Activated CD4-positive, alpha-beta memory T cell treated with anti-CD3 and anti-CD28 coated beads for 36 hours (primary cell): ENCODE measurements at regions of chr19 and their contacts with region 1.

Region 1: DNA sequence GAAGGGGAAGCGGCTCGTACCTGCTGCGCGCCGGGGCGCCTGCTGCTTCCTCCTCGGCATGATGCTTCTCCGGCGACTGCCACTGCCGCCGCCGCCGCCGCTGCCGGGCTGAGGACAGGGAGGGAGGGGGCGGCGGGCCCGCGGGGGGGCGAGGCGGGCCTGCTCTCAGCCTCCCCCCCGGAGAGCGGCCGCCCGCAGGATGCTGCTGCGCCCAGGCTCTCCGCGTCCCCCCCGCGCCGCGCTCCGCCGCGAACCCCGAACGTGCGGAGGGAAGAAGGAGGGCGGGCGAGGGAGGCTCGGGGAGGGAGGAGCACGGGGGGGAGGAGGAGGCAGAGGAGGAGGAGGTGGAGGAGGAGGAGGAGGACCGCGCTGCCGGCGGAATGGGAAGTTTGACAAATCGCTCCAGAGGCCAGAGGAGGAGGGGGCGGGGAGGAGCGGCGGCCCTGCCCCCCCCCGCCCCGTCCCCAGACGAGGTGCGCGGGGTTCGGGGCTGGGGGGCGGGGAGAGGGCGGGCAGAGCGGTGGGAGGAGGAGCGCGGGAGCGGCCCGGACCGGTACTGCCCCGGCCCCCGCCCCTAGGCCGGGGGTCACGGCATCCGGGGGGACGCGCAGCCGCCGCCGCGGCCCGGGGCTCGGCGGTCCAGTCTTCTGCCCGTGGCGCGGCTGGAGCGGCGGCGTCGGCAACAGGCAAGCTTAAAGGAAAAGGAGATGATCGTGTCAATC is at the start of gene TSHZ3:
- DNase-seq: peak; percentile 67
- H3K4me3 Mint-ChIP-seq: peak within 1 kb of the TSS; percentile 74
- H3K27ac Mint-ChIP-seq: no peak within 1 kb of the TSS
- H3K4me1 Mint-ChIP-seq: peaks cover 38% of the 10 kb centered on the region
- H3K27me3 Mint-ChIP-seq: peaks cover 49% of the 10 kb centered on the region
- total RNA-seq, gene TSHZ3: 1.6 to 2.6 TPM

Region 2: GRCh38 chr19:30227661-30228428 is 1121.5 kb before region 1 on chr19:
- CTCF ChIA-PET with region 1: no interaction called
- POLR2A ChIA-PET with region 1: no interaction called
- intact Hi-C with region 1: loop called (anchors 10 kb)
- DNase-seq: peak; percentile 73
- H3K4me3 Mint-ChIP-seq: peak overlapping the region; percentile 73
- H3K27ac Mint-ChIP-seq: no peak overlapping the region
- H3K4me1 Mint-ChIP-seq: peaks cover 20% of the 10 kb centered on the region
- H3K27me3 Mint-ChIP-seq: peaks cover 65% of the 10 kb centered on the region

Region 3: DNA sequence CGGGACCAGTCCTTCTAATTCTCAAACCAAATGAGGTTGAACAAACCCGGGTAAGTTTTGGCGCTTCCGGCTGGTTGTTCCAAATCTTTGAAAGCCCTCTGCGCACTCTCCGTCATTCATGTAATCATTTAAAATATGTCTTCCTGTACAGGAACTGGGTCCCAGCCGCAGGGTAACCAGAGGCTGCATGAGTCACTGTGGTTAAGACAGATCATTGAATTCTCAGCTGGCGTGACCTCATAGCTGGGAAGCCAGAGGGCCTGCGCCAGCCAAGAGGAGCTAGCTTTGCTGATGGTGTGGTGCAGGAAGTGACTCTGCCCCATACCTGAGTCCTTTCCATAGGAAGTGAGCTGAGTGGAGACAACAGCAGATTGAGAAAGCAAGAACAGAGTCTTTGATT is 135.2 kb before region 1 on chr19:
- CTCF ChIA-PET with region 1: no interaction called
- POLR2A ChIA-PET with region 1: no interaction called
- intact Hi-C with region 1: loop called (anchors 2 kb)
- DNase-seq: peak; percentile 96
- H3K4me3 Mint-ChIP-seq: peak overlapping the region; percentile 69
- H3K27ac Mint-ChIP-seq: peak overlapping the region; percentile 99
- H3K4me1 Mint-ChIP-seq: peaks cover 26% of the 10 kb centered on the region
- H3K27me3 Mint-ChIP-seq: peaks cover 3% of the 10 kb centered on the region

Region 4: DNA sequence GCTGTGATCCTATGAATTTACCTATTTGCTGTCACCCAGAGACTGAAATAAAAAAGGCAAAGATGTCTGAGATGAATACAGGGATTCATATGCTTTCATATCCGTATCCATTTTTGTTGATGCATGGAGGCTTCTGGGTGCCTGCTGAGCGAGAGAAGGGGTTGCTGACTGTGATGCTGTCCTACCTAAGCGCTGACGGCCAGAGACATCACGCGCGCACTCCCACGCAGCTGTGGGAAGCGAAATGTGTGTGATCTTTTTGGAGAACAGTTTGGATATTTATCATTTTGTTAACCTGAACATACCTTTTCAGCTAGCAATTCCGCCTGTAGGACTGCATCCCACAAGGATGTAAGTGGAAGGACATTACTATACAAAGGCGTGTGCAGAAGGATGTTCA is 24.0 kb before region 1 on chr19:
- CTCF ChIA-PET with region 1: no interaction called
- POLR2A ChIA-PET with region 1: no interaction called
- intact Hi-C with region 1: loop called (anchors 2 kb)
- DNase-seq: no peak
- H3K4me3 Mint-ChIP-seq: no peak overlapping the region
- H3K27ac Mint-ChIP-seq: no peak overlapping the region
- H3K4me1 Mint-ChIP-seq: peaks cover 3% of the 10 kb centered on the region
- H3K27me3 Mint-ChIP-seq: no peaks in the 10 kb centered on the region